ENCODE measurements at regions of chr22 and their contacts with region 1.

Region 1: GRCh38 chr22:50244420-50245213 is at the start of gene TUBGCP6:
- DNase-seq: peak; percentile 94
- H3K4me3 Mint-ChIP-seq: peak within 1 kb of the TSS; percentile 99
- H3K27ac Mint-ChIP-seq: peak within 1 kb of the TSS; percentile 98
- H3K4me1 Mint-ChIP-seq: peaks cover 48% of the 10 kb centered on the region
- H3K27me3 Mint-ChIP-seq: no peaks in the 10 kb centered on the region
- total RNA-seq, gene TUBGCP6: 44.5 to 47.8 TPM

Region 2: GRCh38 chr22:50148991-50149721 is 95.5 kb before region 1 on chr22:
- CTCF ChIA-PET with region 1: interaction called, 11 read pairs
- intact Hi-C with region 1: no loop called
- DNase-seq: peak; percentile 76
- H3K4me3 Mint-ChIP-seq: no peak overlapping the region
- H3K27ac Mint-ChIP-seq: no peak overlapping the region
- H3K4me1 Mint-ChIP-seq: no peaks in the 10 kb centered on the region
- H3K27me3 Mint-ChIP-seq: no peaks in the 10 kb centered on the region

Region 3: GRCh38 chr22:50200461-50201190 is 44.0 kb before region 1 on chr22 and contains the start of gene SELENOO:
- CTCF ChIA-PET with region 1: no interaction called
- intact Hi-C with region 1: loop called (anchors 2 kb)
- DNase-seq: peak; percentile 92
- H3K4me3 Mint-ChIP-seq: peak within 1 kb of the TSS; percentile 77
- H3K27ac Mint-ChIP-seq: no peak within 1 kb of the TSS
- H3K4me1 Mint-ChIP-seq: peaks cover 22% of the 10 kb centered on the region
- H3K27me3 Mint-ChIP-seq: no peaks in the 10 kb centered on the region
- total RNA-seq, gene SELENOO: 16.5 to 16.7 TPM

Region 4: GRCh38 chr22:50270666-50271394 is 26.2 kb after region 1 on chr22:
- CTCF ChIA-PET with region 1: no interaction called
- intact Hi-C with region 1: loop called (anchors 1 kb)
- DNase-seq: peak; percentile 78
- H3K4me3 Mint-ChIP-seq: peak overlapping the region; percentile 66
- H3K27ac Mint-ChIP-seq: no peak overlapping the region
- H3K4me1 Mint-ChIP-seq: peaks cover 13% of the 10 kb centered on the region
- H3K27me3 Mint-ChIP-seq: no peaks in the 10 kb centered on the region

Region 5: GRCh38 chr22:50341977-50342650 is 97.5 kb after region 1 on chr22:
- CTCF ChIA-PET with region 1: interaction called, 8 read pairs
- intact Hi-C with region 1: loop called (anchors 1 kb)
- DNase-seq: peak; percentile 94
- H3K4me3 Mint-ChIP-seq: peak overlapping the region; percentile 71
- H3K27ac Mint-ChIP-seq: peak overlapping the region; percentile 82
- H3K4me1 Mint-ChIP-seq: peaks cover 8% of the 10 kb centered on the region
- H3K27me3 Mint-ChIP-seq: no peaks in the 10 kb centered on the region

Region 6: GRCh38 chr22:50474668-50475492 is 230.3 kb after region 1 on chr22 and contains the start of gene SBF1:
- CTCF ChIA-PET with region 1: no interaction called
- intact Hi-C with region 1: loop called (anchors 10 kb)
- DNase-seq: peak; percentile 90
- H3K4me3 Mint-ChIP-seq: peak within 1 kb of the TSS; percentile 95
- H3K27ac Mint-ChIP-seq: peak within 1 kb of the TSS; percentile 87
- H3K4me1 Mint-ChIP-seq: peaks cover 46% of the 10 kb centered on the region
- H3K27me3 Mint-ChIP-seq: peaks cover 3% of the 10 kb centered on the region
- total RNA-seq, gene SBF1: 100 TPM

Measured in activated naive CD4-positive, alpha-beta T cell treated with anti-CD3 and anti-CD28 coated beads for 36 hours (primary cell).